GM12878 (cell line): ENCODE measurements at regions of chr1 and their contacts with region 1.

Region 1: DNA sequence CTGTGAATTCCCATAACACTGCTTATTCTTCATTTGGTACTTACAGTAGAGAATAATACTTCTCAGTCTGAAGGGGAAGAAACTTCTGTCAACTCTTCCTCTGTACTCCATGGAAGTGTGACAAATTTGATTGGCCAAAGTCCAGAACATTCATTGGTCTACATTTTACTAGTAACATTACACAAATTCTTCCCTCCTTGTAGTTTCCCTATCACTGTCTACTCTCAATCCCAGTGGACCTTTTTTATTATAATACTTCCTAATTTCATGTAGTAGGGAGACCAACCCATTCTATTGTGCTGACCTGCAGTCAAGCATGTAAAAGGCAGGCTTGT is 74.7 kb downstream of the ALG6 start:
- DNase-seq: no peak
- ATAC-seq: no peak; the same call in 2 of the 3 replicates
- H3K4me3 ChIP-seq: no peak overlapping the region
- H3K27ac ChIP-seq: no peak overlapping the region
- H3K4me1 ChIP-seq: no peaks in the 10 kb centered on the region
- H3K27me3 ChIP-seq: no peaks in the 10 kb centered on the region
- CTCF ChIP-seq: no peak
- EP300 ChIP-seq: no peak
- POLR2A ChIP-seq: no peak
- RAD21 ChIP-seq: no peak

Region 2: DNA sequence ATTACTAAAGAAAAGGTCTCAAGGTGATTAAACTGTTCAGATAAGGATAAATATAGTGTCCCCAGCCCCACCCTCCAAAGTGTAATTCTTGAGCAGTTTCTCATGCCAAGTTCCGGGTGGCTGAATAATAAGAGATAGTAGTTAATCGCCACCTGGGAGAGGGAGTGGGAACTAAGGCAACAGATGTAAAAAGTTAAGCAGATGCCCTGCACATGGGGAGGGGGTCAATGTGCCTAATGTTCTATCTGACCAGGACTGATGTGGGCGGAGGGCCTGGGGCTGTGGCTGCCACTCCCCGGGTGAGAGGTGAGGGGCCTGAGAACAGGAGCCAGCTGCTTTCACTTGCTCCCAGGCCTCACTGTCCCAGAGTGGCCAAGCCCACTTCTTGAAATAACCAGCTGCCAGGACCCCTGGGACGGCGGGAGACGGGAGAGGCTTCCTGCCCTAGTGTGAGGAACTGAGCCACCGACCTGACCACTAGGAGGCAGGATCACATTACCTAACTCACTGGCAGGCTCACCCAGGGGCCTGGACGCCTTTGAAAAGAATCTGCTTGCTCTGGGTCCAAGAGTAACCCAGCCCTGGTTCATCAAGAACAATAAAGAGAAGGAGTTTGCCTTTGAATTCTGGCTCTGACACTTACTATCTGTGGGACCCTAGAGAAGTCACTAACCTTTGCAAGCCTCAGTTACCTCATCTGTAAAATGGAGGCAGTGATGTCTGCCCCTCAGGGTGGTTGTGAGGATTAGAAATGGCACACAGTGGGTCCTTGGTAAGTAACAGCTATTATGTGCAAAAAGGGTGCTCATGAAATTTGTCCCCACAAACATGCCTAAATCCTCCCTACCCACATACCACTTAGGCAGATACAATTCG is 479.0 kb before region 1 on chr1:
- CTCF ChIA-PET with region 1: interaction called, 9 read pairs
- POLR2A ChIA-PET with region 1: no interaction called
- RAD21 ChIA-PET with region 1: no interaction called
- SMC1A ChIA-PET with region 1: no interaction called
- in situ Hi-C with region 1: no loop called
- intact Hi-C with region 1: loop called (anchors 5 kb)
- DNase-seq: no peak
- ATAC-seq: peak; percentile 92
- H3K4me3 ChIP-seq: no peak overlapping the region
- H3K27ac ChIP-seq: no peak overlapping the region
- H3K4me1 ChIP-seq: peaks cover 10% of the 10 kb centered on the region
- H3K27me3 ChIP-seq: no peaks in the 10 kb centered on the region
- CTCF ChIP-seq: peak; percentile 67 to 71 (median 68)
- EP300 ChIP-seq: no peak
- POLR2A ChIP-seq: no peak
- RAD21 ChIP-seq: peak; percentile 75

Region 3: DNA sequence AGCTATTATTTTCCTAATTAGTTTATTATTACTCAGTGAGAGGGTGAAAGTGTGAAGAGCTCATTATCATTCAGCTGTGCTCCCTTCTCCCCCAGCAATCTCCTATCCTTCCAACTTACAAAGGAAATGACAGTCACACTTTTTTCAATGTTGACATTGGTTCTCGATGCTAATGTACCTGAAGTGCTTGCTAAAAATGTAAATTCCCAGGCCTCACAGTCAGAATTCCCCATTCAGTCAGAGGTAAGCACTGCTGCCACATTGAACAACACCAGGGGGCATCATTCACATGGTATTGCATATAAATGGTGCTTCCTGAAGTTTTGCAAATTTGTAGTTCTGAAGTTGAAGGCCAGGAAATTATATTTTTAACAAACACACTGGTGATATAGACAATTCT is 252.4 kb before region 1 on chr1:
- CTCF ChIA-PET with region 1: no interaction called
- POLR2A ChIA-PET with region 1: no interaction called
- RAD21 ChIA-PET with region 1: no interaction called
- SMC1A ChIA-PET with region 1: no interaction called
- in situ Hi-C with region 1: no loop called
- intact Hi-C with region 1: loop called (anchors 1 kb)
- DNase-seq: no peak
- ATAC-seq: no peak
- H3K4me3 ChIP-seq: no peak overlapping the region
- H3K27ac ChIP-seq: no peak overlapping the region
- H3K4me1 ChIP-seq: no peaks in the 10 kb centered on the region
- H3K27me3 ChIP-seq: 0 out of 4 replicates have a peak, but pooled peaks cover 0 to 2% of the 10 kb centered on the region in 2 experiments
- CTCF ChIP-seq: peak in 2 of 3 experiments; percentile 9 to 19; a peak in 2 of 6 replicates
- EP300 ChIP-seq: no peak
- POLR2A ChIP-seq: no peak
- RAD21 ChIP-seq: no peak

Region 4: DNA sequence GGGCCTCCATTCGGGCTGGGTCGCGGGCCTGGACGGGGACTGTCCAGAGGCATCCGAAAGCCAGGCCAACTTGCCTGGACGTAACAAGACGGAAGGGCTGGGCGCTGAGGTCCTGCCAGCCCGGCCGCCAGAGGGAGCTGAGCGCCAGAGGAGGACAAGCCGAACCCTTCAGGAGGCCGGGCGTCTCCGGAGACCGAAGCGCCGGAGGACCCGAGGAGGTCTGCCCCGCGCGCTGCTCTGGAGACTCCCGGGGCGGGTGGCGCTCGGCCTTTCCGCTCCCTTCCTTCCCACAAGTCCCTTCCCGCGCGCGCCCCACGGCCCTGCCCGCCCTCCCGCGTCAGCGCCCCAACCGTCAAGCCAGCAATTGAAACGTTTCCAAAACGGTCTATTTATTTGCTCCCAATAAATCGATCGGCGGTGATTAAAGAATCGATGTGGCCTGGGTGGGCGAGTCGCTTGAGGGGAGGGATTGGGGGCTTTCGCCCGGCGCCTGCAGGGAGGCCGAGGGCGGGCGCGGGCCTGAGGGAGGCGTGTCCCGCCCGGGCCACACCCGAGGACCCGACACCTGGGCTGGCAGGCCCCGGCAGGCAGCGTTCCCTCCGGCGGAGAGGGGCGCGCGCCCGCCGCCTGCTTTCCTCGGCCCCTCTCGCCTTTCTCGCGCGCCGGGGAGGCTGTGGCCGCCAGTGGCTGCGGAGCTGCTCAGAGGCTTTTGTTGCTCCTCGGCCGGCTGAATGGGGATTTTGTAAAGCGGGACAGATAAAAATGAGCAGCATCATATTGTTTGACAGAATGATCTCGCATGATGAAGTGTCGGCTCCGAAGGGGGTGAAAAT is 124.9 kb before region 1 on chr1:
- CTCF ChIA-PET with region 1: interaction called, 3 read pairs
- POLR2A ChIA-PET with region 1: no interaction called
- RAD21 ChIA-PET with region 1: no interaction called
- SMC1A ChIA-PET with region 1: no interaction called
- in situ Hi-C with region 1: no loop called
- intact Hi-C with region 1: loop called (anchors 1 kb)
- DNase-seq: no peak
- ATAC-seq: peak; percentile 96
- H3K4me3 ChIP-seq: peak overlapping the region; percentile 69
- H3K27ac ChIP-seq: no peak overlapping the region
- H3K4me1 ChIP-seq: no peaks in the 10 kb centered on the region
- H3K27me3 ChIP-seq: peaks cover 9 to 35% of the 10 kb centered on the region in 2 experiments
- CTCF ChIP-seq: peak; percentile 60 to 87 (median 66)
- EP300 ChIP-seq: no peak
- POLR2A ChIP-seq: no peak
- RAD21 ChIP-seq: peak; percentile 35; the same call in 1 of the 2 replicates

Region 5: GRCh38 chr1:63327417-63328139 is 114.5 kb before region 1 on chr1:
- CTCF ChIA-PET with region 1: interaction called, 25 read pairs
- POLR2A ChIA-PET with region 1: no interaction called
- RAD21 ChIA-PET with region 1: no interaction called
- SMC1A ChIA-PET with region 1: interaction called, 3 read pairs
- in situ Hi-C with region 1: no loop called
- intact Hi-C with region 1: no loop called
- DNase-seq: no peak
- ATAC-seq: peak; percentile 88
- H3K4me3 ChIP-seq: no peak overlapping the region
- H3K27ac ChIP-seq: no peak overlapping the region
- H3K4me1 ChIP-seq: no peaks in the 10 kb centered on the region; the same call in 1 of the 2 replicates
- H3K27me3 ChIP-seq: peaks cover 13 to 48% of the 10 kb centered on the region in 2 experiments
- CTCF ChIP-seq: peak; percentile 72 to 83 (median 80)
- EP300 ChIP-seq: no peak
- POLR2A ChIP-seq: no peak
- RAD21 ChIP-seq: no peak

Region 6: DNA sequence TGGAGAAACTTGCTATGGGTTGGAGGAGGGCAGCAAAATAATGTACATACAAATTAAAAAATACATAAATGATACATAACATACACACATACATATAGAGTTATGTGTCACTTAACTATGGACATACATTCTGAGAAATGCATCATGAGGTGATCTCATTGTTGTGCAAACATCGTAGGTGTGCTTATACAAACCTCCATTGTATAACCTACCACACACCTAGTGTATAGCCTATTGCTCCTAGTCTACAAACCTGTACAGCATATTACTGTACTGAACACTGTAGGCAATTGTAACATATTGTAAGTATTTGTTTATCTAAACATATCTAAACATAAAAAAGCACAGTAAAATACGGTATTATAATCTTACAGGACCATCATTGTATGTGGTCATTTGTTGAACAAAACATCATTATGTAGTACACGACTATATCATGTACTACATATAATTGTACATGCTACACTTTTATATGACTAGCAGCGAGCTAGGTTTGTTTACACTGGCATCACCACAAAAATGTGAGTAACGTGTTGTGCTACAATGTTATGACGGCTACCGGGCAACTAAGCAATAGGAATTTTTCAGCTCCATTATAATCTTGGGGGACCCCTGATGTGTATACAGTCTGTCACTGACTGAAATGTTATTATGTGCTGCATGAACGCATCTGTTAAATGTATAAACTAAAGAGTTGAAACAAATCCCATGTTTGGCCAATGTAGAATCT is 45.4 kb after region 1 on chr1:
- CTCF ChIA-PET with region 1: no interaction called
- POLR2A ChIA-PET with region 1: no interaction called
- RAD21 ChIA-PET with region 1: no interaction called
- SMC1A ChIA-PET with region 1: no interaction called
- in situ Hi-C with region 1: no loop called
- intact Hi-C with region 1: no loop called
- DNase-seq: no peak
- ATAC-seq: no peak
- H3K4me3 ChIP-seq: no peak overlapping the region
- H3K27ac ChIP-seq: no peak overlapping the region
- H3K4me1 ChIP-seq: no peaks in the 10 kb centered on the region
- H3K27me3 ChIP-seq: no peaks in the 10 kb centered on the region
- CTCF ChIP-seq: no peak
- EP300 ChIP-seq: no peak
- POLR2A ChIP-seq: no peak
- RAD21 ChIP-seq: no peak